Vagina (tissue), 2 donors: ENCODE measurements at regions of chr12 and their contacts with region 1.

Region 1: DNA sequence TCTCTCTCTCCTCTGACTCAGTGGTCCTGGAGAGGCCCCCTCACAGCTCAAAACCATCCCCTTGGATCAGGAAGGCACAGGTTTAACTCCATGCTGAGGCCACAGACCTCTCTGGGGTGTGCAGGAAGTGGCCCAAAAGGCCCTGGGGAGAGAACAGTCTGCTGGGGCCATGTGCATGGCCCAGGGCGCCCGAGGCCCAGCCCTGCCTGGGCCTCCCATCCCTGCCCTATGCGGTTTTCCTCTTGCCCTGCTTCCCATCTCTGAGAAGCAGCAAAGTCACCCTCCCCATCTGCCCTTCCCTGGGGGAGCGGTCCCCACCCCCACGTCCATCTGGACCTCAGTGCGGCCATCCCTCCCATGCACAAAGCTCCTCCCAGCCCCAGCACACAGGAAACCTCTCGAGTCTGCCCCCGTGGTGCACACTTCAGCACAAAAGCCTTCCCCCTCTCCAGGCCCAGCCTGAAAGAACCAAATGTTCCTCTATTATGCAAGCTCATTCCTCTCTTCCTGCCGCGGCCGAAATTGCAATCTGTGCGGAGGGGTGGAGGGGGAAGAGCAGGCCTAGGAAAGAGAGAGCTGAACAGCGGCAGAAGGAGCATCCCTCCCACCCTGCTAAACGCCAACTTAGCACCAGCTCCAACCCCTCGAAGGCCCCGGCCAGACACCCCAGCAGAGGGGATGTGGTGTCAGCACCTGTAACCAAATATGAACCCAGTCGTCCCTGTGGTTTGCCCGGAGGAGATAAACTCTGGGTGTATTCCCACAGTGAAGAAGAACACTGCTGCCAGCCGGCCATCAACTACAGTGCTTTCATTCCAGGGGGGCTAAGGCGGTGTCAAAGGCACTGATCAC is 108.5 kb downstream of the SCARB1 start:
- DNase-seq: peak in 1 of 2 donors; percentile 98
- H3K4me3 ChIP-seq: no peak overlapping the region
- H3K27ac ChIP-seq: peak overlapping the region; percentile 88
- H3K4me1 ChIP-seq: peaks cover 44% of the 10 kb centered on the region
- H3K27me3 ChIP-seq: no peaks in the 10 kb centered on the region
- CTCF ChIP-seq: no peak
- POLR2A ChIP-seq: peak in 1 of 2 donors; percentile 16

Region 2: GRCh38 chr12:124340080-124340900 is 414.9 kb before region 1 on chr12:
- intact Hi-C with region 1: loop called (anchors 5 kb)
- DNase-seq: no peak
- H3K4me3 ChIP-seq: no peak overlapping the region
- H3K27ac ChIP-seq: no peak overlapping the region
- H3K4me1 ChIP-seq: no peaks in the 10 kb centered on the region
- H3K27me3 ChIP-seq: no peaks in the 10 kb centered on the region
- CTCF ChIP-seq: no peak
- POLR2A ChIP-seq: no peak

Region 3: DNA sequence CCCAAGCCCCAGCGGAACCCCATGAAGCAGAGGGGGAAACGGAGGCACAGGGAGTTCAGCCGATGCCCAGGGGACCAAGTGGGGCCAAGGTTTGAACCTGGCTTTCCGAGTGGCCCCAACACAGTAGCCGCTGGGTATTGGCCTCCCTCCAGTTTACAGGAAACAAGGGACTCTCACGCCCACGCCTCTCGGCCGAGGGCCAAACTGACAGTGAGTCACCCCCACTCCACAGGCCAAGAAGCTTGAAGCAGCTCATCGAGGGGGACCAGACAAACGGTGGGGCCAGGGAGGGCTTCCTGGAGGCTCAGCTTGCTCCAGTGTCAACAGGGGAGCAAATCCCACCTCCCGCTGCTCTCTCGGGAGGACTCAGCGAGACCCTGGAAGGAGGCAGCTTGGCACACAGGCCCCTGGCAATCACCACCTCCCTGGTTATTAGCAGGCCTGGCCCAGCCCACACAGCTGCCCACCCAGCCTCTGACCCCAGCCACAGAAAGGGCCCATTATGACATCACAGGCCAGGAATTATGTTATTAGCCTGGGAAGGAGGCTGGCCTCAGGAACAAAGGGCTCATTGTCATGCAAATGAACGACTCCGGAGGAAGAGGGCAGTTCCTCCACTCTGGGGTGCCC is 242.4 kb before region 1 on chr12:
- intact Hi-C with region 1: loop called (anchors 5 kb)
- DNase-seq: no peak
- H3K4me3 ChIP-seq: peak overlapping the region in 1 of 2 donors; percentile 5
- H3K27ac ChIP-seq: peak overlapping the region; percentile 69
- H3K4me1 ChIP-seq: peaks cover 95% of the 10 kb centered on the region
- H3K27me3 ChIP-seq: no peaks in the 10 kb centered on the region
- CTCF ChIP-seq: no peak
- POLR2A ChIP-seq: no peak